H1 (cell line): ENCODE measurements at regions of chr4 and their contacts with region 1.

Region 1: DNA sequence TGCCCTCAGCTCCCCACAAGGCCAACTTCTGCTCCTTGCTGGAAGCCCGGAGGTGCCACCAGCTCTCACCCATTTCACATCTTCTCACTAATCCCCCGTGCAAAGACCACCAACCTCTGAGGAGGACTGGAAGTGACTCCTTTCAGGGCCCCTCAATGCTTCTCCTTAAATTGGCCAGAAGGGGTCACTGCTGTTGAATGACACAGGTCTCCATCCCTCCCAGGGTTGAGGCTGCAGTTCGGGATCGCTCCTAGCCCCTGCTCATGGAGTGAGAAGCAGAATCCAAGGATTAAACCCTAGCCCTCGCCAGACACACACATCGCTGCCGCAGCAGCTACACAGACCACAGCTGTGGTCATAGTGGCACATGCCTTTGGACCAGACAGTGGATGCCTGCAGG is 279.5 kb upstream of the TAPT1 start:
- DNase-seq: peak; percentile 27 to 55
- H3K4me3 ChIP-seq: no peak overlapping the region
- H3K27ac ChIP-seq: no peak overlapping the region
- H3K4me1 ChIP-seq: no peaks in the 10 kb centered on the region
- H3K27me3 ChIP-seq: no peaks in the 10 kb centered on the region
- CTCF ChIP-seq: peak; percentile 55 to 75 (median 62)
- EP300 ChIP-seq: no peak
- POLR2A ChIP-seq: no peak
- RAD21 ChIP-seq: peak; percentile 76 to 84

Region 2: DNA sequence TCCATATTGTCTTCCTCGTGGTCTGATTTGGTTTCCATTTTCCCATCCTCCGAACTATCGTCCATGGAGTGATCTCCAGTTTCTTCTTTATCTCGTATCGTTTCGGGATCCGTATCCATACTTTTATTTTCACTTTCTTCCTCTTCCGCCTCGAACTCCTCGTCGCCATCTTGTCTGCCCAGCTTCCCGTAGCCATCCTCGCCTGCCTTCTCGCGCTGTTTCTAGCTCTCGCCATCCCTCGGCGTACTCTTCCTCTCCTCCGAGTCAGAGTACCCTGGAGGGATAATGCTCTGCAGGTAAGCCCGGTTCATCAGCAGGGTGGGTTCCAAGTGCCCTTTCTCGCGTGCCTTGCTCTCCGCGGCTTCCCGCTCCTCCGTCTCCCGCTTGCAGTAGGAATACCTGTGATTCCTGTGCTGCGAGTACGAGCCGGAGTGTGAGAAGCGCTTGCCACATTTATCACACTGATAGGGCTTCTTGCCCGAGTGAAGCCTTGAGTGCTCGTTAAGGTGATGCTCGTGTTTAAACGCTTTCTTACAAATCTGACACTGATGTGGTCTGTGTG is 144.9 kb before region 1 on chr4:
- CTCF ChIA-PET with region 1: no interaction called
- POLR2A ChIA-PET with region 1: no interaction called
- DNase-seq: no peak
- H3K4me3 ChIP-seq: no peak overlapping the region
- H3K27ac ChIP-seq: no peak overlapping the region
- H3K4me1 ChIP-seq: peaks cover 0 to 2% (median 0%) of the 10 kb centered on the region in 4 experiments; a peak in 1 of 7 replicates
- H3K27me3 ChIP-seq: no peaks in the 10 kb centered on the region; a peak in 1 of 7 replicates
- CTCF ChIP-seq: no peak
- EP300 ChIP-seq: no peak
- POLR2A ChIP-seq: no peak
- RAD21 ChIP-seq: no peak

Region 3: DNA sequence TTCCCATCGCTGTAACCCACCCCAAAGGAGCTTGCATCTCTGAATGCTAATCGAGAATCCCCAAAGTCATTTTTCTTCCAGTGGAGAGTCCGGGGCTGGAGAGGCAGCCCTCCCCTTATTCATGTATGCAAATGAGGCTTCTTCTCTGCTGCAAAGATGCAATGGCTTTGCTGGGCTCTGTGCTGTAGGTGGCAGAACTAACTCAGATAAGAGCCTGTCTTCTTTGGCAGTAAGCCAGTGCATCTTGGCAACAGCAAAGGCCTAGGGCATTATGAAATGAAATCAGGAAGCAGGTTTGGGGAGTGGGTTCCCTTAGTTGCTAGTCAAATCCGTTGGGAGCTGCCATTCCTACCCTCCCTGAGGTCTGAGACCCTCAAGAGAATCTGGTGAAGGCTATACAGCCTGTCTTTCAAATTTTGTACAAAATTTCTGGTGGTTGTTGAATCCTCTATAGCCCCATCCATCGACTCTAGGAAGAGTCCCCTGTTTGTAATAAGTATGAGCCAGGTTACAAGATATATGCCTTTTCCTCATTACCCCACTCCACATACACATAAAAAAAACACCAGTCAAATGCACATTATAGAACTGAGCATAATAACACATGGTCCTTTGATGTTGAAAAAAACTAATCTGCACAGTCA is 11.2 kb after region 1 on chr4:
- CTCF ChIA-PET with region 1: interaction called, 16 read pairs
- POLR2A ChIA-PET with region 1: no interaction called
- DNase-seq: peak in 1 of 2 experiments; percentile 13
- H3K4me3 ChIP-seq: no peak overlapping the region
- H3K27ac ChIP-seq: no peak overlapping the region
- H3K4me1 ChIP-seq: no peaks in the 10 kb centered on the region
- H3K27me3 ChIP-seq: no peaks in the 10 kb centered on the region
- CTCF ChIP-seq: peak in 2 of 3 experiments; percentile 38 to 53; a peak in 3 of 4 replicates
- EP300 ChIP-seq: no peak
- POLR2A ChIP-seq: no peak
- RAD21 ChIP-seq: peak; percentile 66 to 69

Region 4: DNA sequence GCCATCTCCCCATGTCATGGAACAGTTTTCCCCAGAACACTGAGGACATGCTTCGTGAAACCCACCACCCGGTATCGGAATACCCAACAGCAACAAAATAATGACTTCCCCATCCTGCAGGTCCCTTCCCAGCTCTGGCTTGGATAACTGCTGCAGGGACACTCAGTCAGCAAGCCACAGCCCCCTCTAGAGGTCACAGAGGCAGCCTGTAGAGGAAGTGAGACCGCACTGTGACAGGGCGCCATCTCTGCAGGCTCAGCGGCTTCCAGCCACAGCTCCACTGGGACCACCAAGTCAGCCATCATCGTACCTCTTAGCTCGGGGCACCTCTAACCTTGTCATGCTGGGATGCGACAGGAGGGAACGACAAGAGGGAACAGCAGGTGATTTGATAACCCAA is 76.8 kb after region 1 on chr4:
- CTCF ChIA-PET with region 1: interaction called, 10 read pairs
- POLR2A ChIA-PET with region 1: interaction called, 3 read pairs
- DNase-seq: peak; percentile 19 to 78
- H3K4me3 ChIP-seq: no peak overlapping the region
- H3K27ac ChIP-seq: no peak overlapping the region
- H3K4me1 ChIP-seq: no peaks in the 10 kb centered on the region
- H3K27me3 ChIP-seq: no peaks in the 10 kb centered on the region
- CTCF ChIP-seq: peak; percentile 83 to 90 (median 90)
- EP300 ChIP-seq: no peak
- POLR2A ChIP-seq: no peak
- RAD21 ChIP-seq: peak; percentile 79 to 84

Region 5: DNA sequence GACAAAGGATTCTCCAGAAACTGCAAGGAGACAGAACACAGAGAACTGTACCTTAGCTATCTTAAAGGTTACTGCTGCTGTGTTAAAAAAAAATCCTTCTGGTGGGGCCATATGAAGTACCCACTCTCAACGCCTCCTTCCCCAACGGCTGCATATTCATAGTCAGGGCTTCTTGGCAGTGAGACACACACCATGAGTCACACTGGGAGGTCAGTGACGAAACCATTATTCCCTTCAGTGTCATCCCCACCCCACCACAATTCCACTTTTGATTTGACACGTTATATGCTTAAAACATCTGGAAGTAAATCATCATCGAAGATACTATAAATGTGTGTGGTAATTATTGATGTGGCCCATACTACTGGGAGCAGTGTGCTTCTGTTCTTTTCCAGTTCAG is 121.2 kb after region 1 on chr4:
- CTCF ChIA-PET with region 1: no interaction called
- POLR2A ChIA-PET with region 1: no interaction called
- DNase-seq: no peak
- H3K4me3 ChIP-seq: no peak overlapping the region
- H3K27ac ChIP-seq: no peak overlapping the region
- H3K4me1 ChIP-seq: no peaks in the 10 kb centered on the region
- H3K27me3 ChIP-seq: no peaks in the 10 kb centered on the region
- CTCF ChIP-seq: no peak
- EP300 ChIP-seq: no peak
- POLR2A ChIP-seq: no peak
- RAD21 ChIP-seq: no peak

Region 6: DNA sequence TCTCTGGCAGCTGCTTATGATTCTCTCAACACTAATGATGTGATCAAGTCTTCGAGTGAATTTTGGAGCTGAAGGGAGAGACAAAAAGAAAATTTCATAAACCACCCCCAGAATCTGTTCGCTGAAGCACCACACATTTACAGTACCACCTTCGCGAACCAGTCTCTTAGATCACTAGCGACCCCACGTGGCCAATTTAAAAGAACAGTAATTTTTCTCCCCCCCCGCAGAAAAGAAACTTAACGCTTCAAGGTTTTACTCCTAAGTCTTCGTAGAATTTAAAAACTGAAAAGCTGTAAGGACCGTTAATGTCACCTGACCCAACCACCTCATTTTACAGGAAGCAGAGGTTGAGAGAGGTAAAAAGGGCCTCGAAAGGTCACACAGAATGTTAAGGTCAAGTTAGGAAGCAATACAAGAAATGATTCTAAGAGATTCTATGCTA is 818.7 kb after region 1 on chr4:
- CTCF ChIA-PET with region 1: interaction called, 12 read pairs
- POLR2A ChIA-PET with region 1: no interaction called
- DNase-seq: peak in 1 of 2 experiments; percentile 72
- H3K4me3 ChIP-seq: no peak overlapping the region
- H3K27ac ChIP-seq: no peak overlapping the region
- H3K4me1 ChIP-seq: peaks cover 0 to 7% (median 3%) of the 10 kb centered on the region in 4 experiments; a peak in 1 of 7 replicates
- H3K27me3 ChIP-seq: 0 out of 7 replicates have a peak, but pooled peaks cover 0 to 3% (median 0%) of the 10 kb centered on the region in 4 experiments
- CTCF ChIP-seq: peak in 2 of 3 experiments; percentile 46 to 67; a peak in 3 of 4 replicates
- EP300 ChIP-seq: no peak
- POLR2A ChIP-seq: no peak
- RAD21 ChIP-seq: peak; percentile 91